ENCODE measurements at regions of chr13 and their contacts with region 1.

Region 1: GRCh38 chr13:48975856-48976575 is at the start of gene FNDC3A:
- DNase-seq: peak; percentile 97
- H3K4me3 Mint-ChIP-seq: peak within 1 kb of the TSS; percentile 96
- H3K27ac Mint-ChIP-seq: peak within 1 kb of the TSS; percentile 100
- H3K4me1 Mint-ChIP-seq: peaks cover 35% of the 10 kb centered on the region
- H3K27me3 Mint-ChIP-seq: no peaks in the 10 kb centered on the region
- total RNA-seq, gene FNDC3A: 22.1 and 23.5 TPM in 2 replicates

Region 2: GRCh38 chr13:48303359-48304142 is 672.5 kb before region 1 on chr13 and contains the start of gene RB1:
- intact Hi-C with region 1: loop called (anchors 5 kb)
- DNase-seq: peak; percentile 97
- H3K4me3 Mint-ChIP-seq: peak within 1 kb of the TSS; percentile 87
- H3K27ac Mint-ChIP-seq: peak within 1 kb of the TSS; percentile 98
- H3K4me1 Mint-ChIP-seq: peaks cover 21% of the 10 kb centered on the region
- H3K27me3 Mint-ChIP-seq: no peaks in the 10 kb centered on the region
- total RNA-seq, gene RB1: 27.3 and 29.0 TPM in 2 replicates

Region 3: DNA sequence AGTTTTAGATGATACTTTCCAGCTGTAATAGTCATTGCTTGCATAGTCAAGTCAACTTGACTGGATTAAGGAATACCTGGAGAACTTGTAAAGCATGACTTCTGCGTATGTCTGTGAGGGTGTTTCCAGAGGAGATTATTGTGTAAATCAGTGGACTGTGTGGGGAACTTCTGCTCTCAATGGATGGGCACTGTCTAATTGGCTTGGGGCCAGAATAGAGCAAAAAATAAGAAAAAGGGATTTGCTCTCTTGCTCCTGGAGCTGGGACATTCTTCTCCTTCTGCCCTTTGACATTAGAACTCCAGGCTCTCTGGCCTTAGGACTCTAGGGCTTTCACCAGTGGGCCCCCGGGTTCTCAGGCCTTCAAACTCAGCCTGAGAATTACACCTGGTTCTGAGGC is 289.2 kb before region 1 on chr13:
- intact Hi-C with region 1: no loop called
- DNase-seq: no peak
- H3K4me3 Mint-ChIP-seq: no peak overlapping the region
- H3K27ac Mint-ChIP-seq: no peak overlapping the region
- H3K4me1 Mint-ChIP-seq: no peaks in the 10 kb centered on the region
- H3K27me3 Mint-ChIP-seq: no peaks in the 10 kb centered on the region

Region 4: GRCh38 chr13:48804821-48805601 is 171.0 kb before region 1 on chr13:
- intact Hi-C with region 1: loop called (anchors 5 kb)
- DNase-seq: peak; percentile 61
- H3K4me3 Mint-ChIP-seq: peak overlapping the region; percentile 49
- H3K27ac Mint-ChIP-seq: peak overlapping the region; percentile 55
- H3K4me1 Mint-ChIP-seq: peaks cover 21% of the 10 kb centered on the region
- H3K27me3 Mint-ChIP-seq: no peaks in the 10 kb centered on the region

Region 5: GRCh38 chr13:48818495-48819031 is 157.5 kb before region 1 on chr13:
- intact Hi-C with region 1: no loop called
- DNase-seq: no peak
- H3K4me3 Mint-ChIP-seq: no peak overlapping the region
- H3K27ac Mint-ChIP-seq: no peak overlapping the region
- H3K4me1 Mint-ChIP-seq: peaks cover 10% of the 10 kb centered on the region
- H3K27me3 Mint-ChIP-seq: peaks cover 1% of the 10 kb centered on the region

Region 6: GRCh38 chr13:48892053-48892690 is 83.8 kb before region 1 on chr13:
- intact Hi-C with region 1: loop called (anchors 1 kb)
- DNase-seq: no peak
- H3K4me3 Mint-ChIP-seq: peak overlapping the region; percentile 20
- H3K27ac Mint-ChIP-seq: peak overlapping the region; percentile 70
- H3K4me1 Mint-ChIP-seq: peaks cover 19% of the 10 kb centered on the region
- H3K27me3 Mint-ChIP-seq: no peaks in the 10 kb centered on the region

Region 7: DNA sequence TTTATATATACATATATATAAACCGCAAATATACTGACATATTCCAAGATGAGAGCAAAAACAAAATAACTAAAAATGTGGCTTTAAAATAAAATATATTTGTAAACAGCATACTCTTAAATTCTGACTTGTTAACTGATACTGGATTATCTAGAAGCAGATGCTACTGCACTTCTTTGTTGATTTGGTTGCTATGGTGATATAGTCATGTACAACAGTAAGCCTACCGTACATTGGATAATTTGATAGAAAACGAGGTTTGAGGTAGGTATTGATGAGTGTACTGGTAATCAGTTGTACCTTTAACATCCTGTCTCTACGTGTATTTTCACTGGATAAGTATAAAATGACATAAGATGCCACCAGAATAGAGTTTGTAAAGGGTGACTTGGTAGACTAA is 57.1 kb after region 1 on chr13:
- intact Hi-C with region 1: no loop called
- DNase-seq: no peak
- H3K4me3 Mint-ChIP-seq: no peak overlapping the region
- H3K27ac Mint-ChIP-seq: no peak overlapping the region
- H3K4me1 Mint-ChIP-seq: no peaks in the 10 kb centered on the region
- H3K27me3 Mint-ChIP-seq: no peaks in the 10 kb centered on the region

Region 8: DNA sequence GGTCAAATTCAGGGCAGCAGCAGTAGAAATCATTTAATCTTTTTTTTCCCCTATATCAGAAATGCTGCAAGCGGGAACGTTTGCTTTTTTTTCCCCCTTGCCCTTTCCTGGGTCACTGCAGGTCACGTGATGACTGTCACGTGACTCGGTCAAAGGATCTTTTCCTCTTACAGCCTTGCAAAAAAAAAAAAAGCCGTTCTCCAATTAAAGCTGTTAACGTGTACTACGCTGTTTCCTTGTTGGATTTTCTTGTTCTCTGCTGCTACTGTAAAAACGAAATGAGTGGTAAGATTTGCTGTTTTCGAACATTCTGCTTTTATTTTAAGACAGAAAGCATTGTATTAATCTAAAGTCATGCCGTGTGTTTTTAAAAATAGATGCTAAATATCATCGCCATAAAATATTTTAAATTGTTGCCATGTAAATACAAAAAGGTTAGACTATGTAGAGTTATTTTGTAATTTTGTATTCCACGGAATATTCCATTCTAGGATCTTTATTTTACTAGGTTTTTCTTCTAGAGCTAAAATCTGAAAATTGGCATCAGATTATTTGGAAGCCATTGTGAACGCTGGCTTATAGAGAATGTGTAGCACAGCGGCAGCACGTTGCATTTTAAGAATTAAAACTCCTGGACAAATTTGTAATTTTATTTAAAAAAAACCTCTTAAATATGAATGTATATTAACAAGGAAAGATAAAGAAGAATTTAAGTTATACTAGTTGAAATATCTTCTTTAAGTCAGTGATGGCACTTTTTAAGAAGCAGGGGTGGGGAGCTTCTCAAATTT is 134.3 kb after region 1 on chr13:
- intact Hi-C with region 1: loop called (anchors 2 kb)
- DNase-seq: peak; percentile 93
- H3K4me3 Mint-ChIP-seq: peak overlapping the region; percentile 81
- H3K27ac Mint-ChIP-seq: peak overlapping the region; percentile 68
- H3K4me1 Mint-ChIP-seq: peaks cover 19% of the 10 kb centered on the region
- H3K27me3 Mint-ChIP-seq: no peaks in the 10 kb centered on the region

Region 9: DNA sequence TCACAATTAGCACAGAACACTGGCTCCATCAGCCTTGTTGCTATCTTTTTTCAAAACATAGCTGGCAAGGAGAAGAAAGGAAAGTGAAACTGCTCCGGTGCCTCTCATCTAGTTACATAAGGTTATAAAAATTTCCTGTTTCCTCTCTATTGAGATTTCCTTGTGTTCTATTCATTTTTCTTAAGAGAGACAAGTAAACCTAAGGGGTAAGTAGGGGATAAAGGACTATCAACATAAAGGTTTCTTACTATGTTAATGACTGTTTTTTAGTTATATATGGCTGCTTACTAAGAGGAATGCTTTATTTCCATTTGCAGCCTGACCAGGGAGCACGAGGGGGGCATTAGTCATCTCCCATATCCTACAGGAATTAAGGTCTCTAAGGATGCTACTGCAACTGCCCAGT is 170.9 kb after region 1 on chr13:
- intact Hi-C with region 1: no loop called
- DNase-seq: peak; percentile 70
- H3K4me3 Mint-ChIP-seq: peak overlapping the region; percentile 88
- H3K27ac Mint-ChIP-seq: peak overlapping the region; percentile 66
- H3K4me1 Mint-ChIP-seq: peaks cover 24% of the 10 kb centered on the region
- H3K27me3 Mint-ChIP-seq: no peaks in the 10 kb centered on the region

Region 10: GRCh38 chr13:49443704-49444523 is 467.9 kb after region 1 on chr13 and contains the starts of genes CAB39L and SETDB2:
- intact Hi-C with region 1: loop called (anchors 5 kb)
- DNase-seq: peak; percentile 100
- H3K4me3 Mint-ChIP-seq: peak within 1 kb of the TSS; percentile 95
- H3K27ac Mint-ChIP-seq: peak within 1 kb of the TSS; percentile 98
- H3K4me1 Mint-ChIP-seq: peaks cover 44% of the 10 kb centered on the region
- H3K27me3 Mint-ChIP-seq: peaks cover 2% of the 10 kb centered on the region
- total RNA-seq, gene CAB39L: 5.7 and 6.8 TPM in 2 replicates
- total RNA-seq, gene SETDB2: 13.4 and 14.5 TPM in 2 replicates